Colonic mucosa (tissue), 4 donors: ENCODE measurements at regions of chr16 and their contacts with region 1.

Region 1: DNA sequence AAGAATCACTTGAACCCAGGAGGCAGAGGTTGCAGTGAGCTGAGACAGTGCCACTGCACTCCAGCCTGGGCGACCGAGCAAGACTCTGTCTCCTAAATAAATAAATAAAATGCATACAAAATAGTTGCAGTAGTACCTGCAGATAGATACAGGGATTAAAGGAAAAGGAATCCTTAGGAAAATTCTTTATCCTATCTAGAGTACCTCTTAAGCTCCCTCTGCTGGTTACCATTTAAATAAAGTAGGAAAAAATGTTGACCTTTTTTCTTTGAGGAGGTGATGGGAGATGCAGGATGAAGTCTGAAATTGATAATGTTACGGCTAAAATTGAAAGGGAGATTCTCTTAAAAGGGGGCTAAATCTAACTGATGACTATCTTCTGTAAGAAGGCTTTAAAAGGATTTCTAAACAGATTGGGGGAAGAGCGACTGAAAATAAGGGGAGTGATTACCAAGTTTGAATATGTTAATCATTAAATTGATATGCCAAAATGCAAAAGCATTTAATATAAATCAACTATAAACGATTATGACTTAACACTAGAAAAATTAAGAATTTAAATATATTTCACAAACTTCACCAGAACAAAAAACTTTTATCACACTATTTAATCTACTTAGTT is 29.4 kb downstream of the C16orf87 start:
- DNase-seq: no peak
- H3K4me3 ChIP-seq: no peak overlapping the region
- H3K27ac ChIP-seq: no peak overlapping the region
- H3K4me1 ChIP-seq: no peaks in the 10 kb centered on the region
- H3K27me3 ChIP-seq: no peaks in the 10 kb centered on the region
- CTCF ChIP-seq: no peak

Region 2: DNA sequence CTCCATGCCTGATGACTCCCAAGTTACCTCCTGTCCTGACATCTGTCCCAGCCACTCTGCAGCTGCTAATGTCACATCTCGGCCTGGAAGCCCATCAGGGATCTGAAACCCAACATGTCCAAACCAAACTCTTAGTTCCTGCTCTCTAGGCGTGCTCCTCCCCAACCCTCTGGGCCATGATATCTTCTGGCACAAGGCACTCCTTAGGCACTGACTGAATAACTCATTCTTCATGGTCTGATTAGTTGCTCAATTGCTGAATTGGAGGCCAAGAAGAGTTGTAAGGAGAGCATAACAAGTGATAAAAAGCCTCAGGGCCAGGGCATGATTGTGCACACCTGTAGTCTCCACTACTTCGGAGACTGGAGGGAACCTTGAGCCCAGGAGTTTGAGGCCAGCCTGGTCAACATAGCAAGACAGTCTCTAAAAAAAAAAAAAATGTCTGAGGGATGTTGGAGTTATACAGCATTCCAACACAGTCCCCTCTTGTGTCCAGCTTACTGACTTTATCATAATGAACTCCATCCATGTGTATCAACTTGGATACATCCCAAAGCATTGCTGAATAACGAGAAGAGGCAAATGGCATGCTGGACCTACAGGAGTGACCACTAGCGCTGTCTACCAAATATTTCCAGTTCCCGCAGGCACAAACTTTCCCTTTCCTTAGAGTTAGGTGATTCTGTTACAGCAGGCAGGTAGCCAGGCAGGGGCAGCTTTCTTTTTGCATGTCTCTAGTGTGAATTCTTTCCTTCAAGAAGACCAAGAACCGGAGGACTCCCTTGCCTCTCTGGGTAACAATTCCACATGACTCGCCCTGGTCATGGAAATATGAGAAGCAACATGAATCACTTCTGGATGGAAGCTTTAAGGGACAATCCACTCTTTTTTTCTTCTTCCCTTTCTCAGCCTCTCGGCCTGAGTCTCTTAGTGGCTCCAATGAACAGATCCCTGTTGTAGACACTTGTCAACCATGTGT is 162.3 kb before region 1 on chr16:
- intact Hi-C with region 1: no loop called
- DNase-seq: no peak
- H3K4me3 ChIP-seq: no peak overlapping the region
- H3K27ac ChIP-seq: no peak overlapping the region
- H3K4me1 ChIP-seq: no peaks in the 10 kb centered on the region
- H3K27me3 ChIP-seq: no peaks in the 10 kb centered on the region
- CTCF ChIP-seq: no peak

Region 3: GRCh38 chr16:46689365-46690280 is 111.9 kb before region 1 on chr16 and contains the start of gene ORC6:
- intact Hi-C with region 1: loop called (anchors 5 kb)
- DNase-seq: peak; percentile 98
- H3K4me3 ChIP-seq: peak within 1 kb of the TSS; percentile 94
- H3K27ac ChIP-seq: peak within 1 kb of the TSS; percentile 93
- H3K4me1 ChIP-seq: peaks cover 21% of the 10 kb centered on the region
- H3K27me3 ChIP-seq: no peaks in the 10 kb centered on the region
- CTCF ChIP-seq: peak; percentile 18
- total RNA-seq, gene ORC6: 6.8 to 28.4 TPM

Region 4: GRCh38 chr16:46853713-46854443 is 52.3 kb after region 1 on chr16:
- intact Hi-C with region 1: no loop called
- DNase-seq: peak; percentile 82
- H3K4me3 ChIP-seq: no peak overlapping the region
- H3K27ac ChIP-seq: no peak overlapping the region
- H3K4me1 ChIP-seq: no peaks in the 10 kb centered on the region
- H3K27me3 ChIP-seq: no peaks in the 10 kb centered on the region
- CTCF ChIP-seq: peak; percentile 73